RWPE1 (cell line): ENCODE measurements at regions of chr19 and their contacts with region 1.

Region 1: GRCh38 chr19:17766543-17767131 is 15.4 kb downstream of the FCHO1 start:
- DNase-seq: peak; percentile 71
- H3K27ac ChIP-seq: peak overlapping the region; percentile 71
- CTCF ChIP-seq: peak; percentile 98

Region 2: GRCh38 chr19:17725422-17726078 is 41.1 kb before region 1 on chr19:
- CTCF ChIA-PET with region 1: interaction called, 14 read pairs
- POLR2A ChIA-PET with region 1: interaction called, 5 read pairs
- DNase-seq: no peak
- H3K27ac ChIP-seq: no peak overlapping the region
- CTCF ChIP-seq: no peak; the same call in 1 of the 2 replicates

Region 3: DNA sequence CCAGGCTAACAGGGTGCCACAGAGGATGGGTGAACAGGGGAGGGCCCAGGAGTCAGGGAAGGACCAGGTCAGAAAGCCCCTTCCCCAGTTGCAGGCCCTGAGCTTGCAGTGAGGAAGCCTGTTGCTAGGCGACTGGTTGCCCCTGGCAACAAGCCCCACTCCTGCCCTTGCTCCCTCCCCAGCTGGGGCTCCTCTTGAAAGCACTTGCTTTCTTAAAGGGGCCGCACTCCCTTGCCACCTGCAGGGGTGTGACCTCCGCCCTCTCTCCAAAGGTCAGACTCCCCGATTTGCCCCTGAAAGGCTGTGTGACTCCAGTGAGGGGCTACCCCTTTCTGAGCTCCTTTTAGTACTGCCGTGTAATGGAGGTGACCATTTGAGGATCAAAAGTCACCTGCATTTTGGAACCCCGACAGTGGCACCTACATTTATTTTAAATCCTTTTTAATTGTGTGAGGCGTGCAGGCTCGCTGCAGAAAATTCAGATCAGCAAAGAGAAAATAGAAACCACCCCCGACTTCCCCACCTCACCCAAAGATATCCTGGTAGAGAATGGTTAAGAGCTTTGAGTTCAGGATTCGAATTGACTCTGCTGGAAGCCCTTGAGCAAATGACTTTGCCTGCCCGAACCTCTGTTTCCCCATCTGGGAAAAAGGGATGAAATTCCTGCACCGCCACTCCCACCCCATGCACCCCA is 10.5 kb before region 1 on chr19:
- CTCF ChIA-PET with region 1: interaction called, 10 read pairs
- POLR2A ChIA-PET with region 1: no interaction called
- DNase-seq: no peak
- H3K27ac ChIP-seq: peak overlapping the region; percentile 76
- CTCF ChIP-seq: no peak

Region 4: GRCh38 chr19:17831419-17831856 is 64.8 kb after region 1 on chr19:
- CTCF ChIA-PET with region 1: no interaction called
- POLR2A ChIA-PET with region 1: no interaction called
- DNase-seq: no peak
- H3K27ac ChIP-seq: peak overlapping the region; percentile 21; the same call in 1 of the 2 replicates
- CTCF ChIP-seq: no peak